Activated CD4-positive, alpha-beta T cell treated with anti-CD3 and anti-CD28 coated beads, Interleukin-2, amount 10 ng/mL, durations not matched to agents 7 days and 5 days (primary cell): ENCODE measurements at regions of chr15 and their contacts with region 1.

Region 1: DNA sequence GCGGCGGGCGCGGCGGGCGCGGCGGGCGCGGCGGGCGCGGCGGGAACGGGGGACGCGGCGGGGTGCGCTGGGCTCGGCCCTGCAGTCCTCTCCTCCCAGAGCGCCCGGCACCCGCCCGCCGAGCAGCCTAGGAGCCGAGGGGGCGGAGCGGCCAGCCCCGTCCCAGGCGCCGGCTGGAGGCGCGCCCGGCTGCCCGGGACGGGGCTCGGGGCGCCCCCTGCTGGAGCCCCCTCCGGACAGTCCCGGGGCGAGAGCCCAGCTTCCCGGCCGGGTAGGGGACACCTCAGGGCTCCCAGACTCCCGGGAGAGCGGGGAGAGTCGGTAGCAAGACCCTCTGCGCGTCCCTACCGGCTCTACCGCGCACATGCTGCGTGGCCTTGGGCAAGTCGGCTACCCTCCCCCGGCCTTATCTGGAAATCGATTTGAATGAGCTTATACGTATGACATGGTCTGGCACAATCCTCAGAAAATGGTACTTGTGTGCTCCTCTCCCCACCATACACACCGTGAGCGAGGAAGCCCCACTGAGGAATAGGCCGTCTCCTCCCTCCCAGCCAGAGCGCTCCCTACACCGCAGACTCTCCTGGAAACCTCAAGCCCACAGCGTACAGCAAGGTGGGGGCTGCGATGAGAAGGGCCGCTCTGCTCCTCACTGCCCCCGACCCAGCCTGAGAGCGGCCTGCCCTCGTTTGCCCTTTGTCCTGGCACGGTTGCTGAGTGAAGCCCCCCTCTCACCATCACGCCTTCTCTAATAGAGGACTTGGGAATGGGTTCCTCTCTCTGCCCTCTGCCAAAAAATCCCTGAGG is at the start of gene DAPK2:
- DNase-seq: peak; percentile 51
- H3K4me3 Mint-ChIP-seq: peak within 1 kb of the TSS; percentile 62
- H3K27ac Mint-ChIP-seq: no peak within 1 kb of the TSS
- H3K4me1 Mint-ChIP-seq: peaks cover 12% of the 10 kb centered on the region
- H3K27me3 Mint-ChIP-seq: peaks cover 36% of the 10 kb centered on the region
- total RNA-seq, gene DAPK2: 0.83 to 0.87 TPM

Region 2: DNA sequence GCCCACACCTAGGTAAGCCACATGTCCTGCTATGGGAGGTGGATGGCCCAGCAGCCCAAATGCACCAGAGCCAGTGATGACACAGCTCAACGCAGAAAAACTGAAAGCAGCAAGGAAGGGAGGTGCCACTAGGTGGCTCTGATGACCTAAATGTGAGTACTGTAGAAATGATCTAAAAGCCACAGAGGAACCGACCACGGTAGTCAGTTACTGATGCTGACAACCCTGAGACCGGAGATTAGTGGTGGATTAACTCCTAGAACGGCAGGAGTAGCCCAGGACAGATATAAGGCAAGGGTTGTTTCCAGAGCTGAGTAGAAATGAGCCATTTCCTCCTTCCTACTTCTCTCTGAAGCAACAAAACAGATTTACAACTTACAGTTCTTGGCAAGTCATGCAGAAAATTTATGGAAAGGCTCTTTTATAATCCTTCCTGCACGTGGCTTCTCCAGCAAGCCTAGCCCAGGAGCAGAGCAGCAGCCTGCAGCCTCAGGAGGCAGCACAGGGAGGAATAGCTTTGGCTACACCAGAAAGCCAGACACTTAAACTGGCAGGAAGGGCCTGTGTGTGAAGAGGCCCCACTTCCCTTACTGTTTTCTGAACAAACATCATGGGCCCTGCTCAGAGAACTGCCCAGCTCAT is 436.2 kb before region 1 on chr15:
- CTCF ChIA-PET with region 1: interaction called, 15 read pairs
- POLR2A ChIA-PET with region 1: no interaction called
- DNase-seq: peak; percentile 86
- H3K4me3 Mint-ChIP-seq: peak overlapping the region; percentile 9
- H3K27ac Mint-ChIP-seq: peak overlapping the region; percentile 91
- H3K4me1 Mint-ChIP-seq: peaks cover 45% of the 10 kb centered on the region
- H3K27me3 Mint-ChIP-seq: no peaks in the 10 kb centered on the region

Region 3: DNA sequence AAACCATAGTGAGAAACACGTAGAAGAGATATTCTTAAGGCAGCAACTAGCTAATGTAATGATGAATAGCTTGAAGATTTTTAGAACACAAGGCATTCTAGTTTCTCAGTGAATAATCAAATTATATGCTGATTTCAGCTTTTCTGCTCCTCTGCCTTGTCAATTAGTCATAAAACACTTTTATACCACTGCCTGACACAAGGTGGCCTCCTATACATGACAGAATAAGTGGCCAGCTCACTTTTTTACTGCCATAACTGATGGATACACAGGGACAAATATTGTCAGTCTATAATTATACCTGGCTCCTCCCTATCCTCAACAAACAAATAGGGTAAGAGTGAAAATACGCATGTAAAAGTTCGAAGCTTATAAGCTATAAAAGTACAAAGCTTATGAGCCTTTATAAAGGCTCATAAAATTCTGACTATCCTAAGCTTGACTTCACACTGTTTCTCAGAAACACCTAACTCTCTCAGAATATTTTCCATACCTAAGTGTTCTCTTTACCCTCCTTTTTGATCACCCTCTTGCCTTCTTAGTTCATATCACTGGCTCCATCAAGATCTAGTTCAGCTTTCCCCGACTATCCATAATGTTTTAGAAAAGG is 294.4 kb before region 1 on chr15:
- CTCF ChIA-PET with region 1: interaction called, 14 read pairs
- POLR2A ChIA-PET with region 1: no interaction called
- DNase-seq: peak; percentile 72
- H3K4me3 Mint-ChIP-seq: no peak overlapping the region
- H3K27ac Mint-ChIP-seq: no peak overlapping the region
- H3K4me1 Mint-ChIP-seq: peaks cover 6% of the 10 kb centered on the region
- H3K27me3 Mint-ChIP-seq: no peaks in the 10 kb centered on the region

Region 4: GRCh38 chr15:63945007-63945788 is 101.4 kb before region 1 on chr15:
- CTCF ChIA-PET with region 1: interaction called, 87 read pairs
- POLR2A ChIA-PET with region 1: no interaction called
- DNase-seq: peak; percentile 72
- H3K4me3 Mint-ChIP-seq: no peak overlapping the region
- H3K27ac Mint-ChIP-seq: peak overlapping the region; percentile 47
- H3K4me1 Mint-ChIP-seq: peaks cover 6% of the 10 kb centered on the region
- H3K27me3 Mint-ChIP-seq: no peaks in the 10 kb centered on the region

Region 5: GRCh38 chr15:64010719-64011118 is 35.8 kb before region 1 on chr15:
- CTCF ChIA-PET with region 1: interaction called, 13 read pairs
- POLR2A ChIA-PET with region 1: interaction called, 3 read pairs
- DNase-seq: peak; percentile 92
- H3K4me3 Mint-ChIP-seq: peak overlapping the region; percentile 37
- H3K27ac Mint-ChIP-seq: peak overlapping the region; percentile 93
- H3K4me1 Mint-ChIP-seq: peaks cover 54% of the 10 kb centered on the region
- H3K27me3 Mint-ChIP-seq: no peaks in the 10 kb centered on the region

Region 6: GRCh38 chr15:64029110-64029509 is 17.4 kb before region 1 on chr15:
- CTCF ChIA-PET with region 1: interaction called, 11 read pairs
- POLR2A ChIA-PET with region 1: no interaction called
- DNase-seq: no peak
- H3K4me3 Mint-ChIP-seq: no peak overlapping the region
- H3K27ac Mint-ChIP-seq: no peak overlapping the region
- H3K4me1 Mint-ChIP-seq: peaks cover 11% of the 10 kb centered on the region
- H3K27me3 Mint-ChIP-seq: no peaks in the 10 kb centered on the region

Region 7: GRCh38 chr15:64093627-64094417 is 47.3 kb after region 1 on chr15 and contains the start of gene CIAO2A:
- CTCF ChIA-PET with region 1: interaction called, 10 read pairs
- POLR2A ChIA-PET with region 1: no interaction called
- DNase-seq: peak; percentile 98
- H3K4me3 Mint-ChIP-seq: peak within 1 kb of the TSS; percentile 93
- H3K27ac Mint-ChIP-seq: peak within 1 kb of the TSS; percentile 98
- H3K4me1 Mint-ChIP-seq: peaks cover 66% of the 10 kb centered on the region
- H3K27me3 Mint-ChIP-seq: no peaks in the 10 kb centered on the region
- total RNA-seq, gene CIAO2A: 67.3 to 77.7 TPM